Esophagus muscularis mucosa (tissue), 4 donors: ENCODE measurements at regions of chr15 and their contacts with region 1.

Region 1: GRCh38 chr15:34342737-34343575 is at the starts of genes NOP10 and NUTM1:
- DNase-seq: peak; percentile 97
- H3K4me3 ChIP-seq: peak within 1 kb of the TSS; percentile 64 to 87 (median 74)
- H3K27ac ChIP-seq: peak within 1 kb of the TSS; percentile 88 to 90 (median 89)
- H3K4me1 ChIP-seq: peaks cover 18 to 29% (median 23%) of the 10 kb centered on the region in 4 donors
- H3K27me3 ChIP-seq: no peaks in the 10 kb centered on the region
- CTCF ChIP-seq: peak; percentile 84 to 97 (median 92)
- EP300 ChIP-seq: no peak
- POLR2A ChIP-seq: peak; percentile 67
- total RNA-seq, gene NOP10: 78.5 to 136 (median 116) TPM
- total RNA-seq, gene NUTM1: not detected

Region 2: DNA sequence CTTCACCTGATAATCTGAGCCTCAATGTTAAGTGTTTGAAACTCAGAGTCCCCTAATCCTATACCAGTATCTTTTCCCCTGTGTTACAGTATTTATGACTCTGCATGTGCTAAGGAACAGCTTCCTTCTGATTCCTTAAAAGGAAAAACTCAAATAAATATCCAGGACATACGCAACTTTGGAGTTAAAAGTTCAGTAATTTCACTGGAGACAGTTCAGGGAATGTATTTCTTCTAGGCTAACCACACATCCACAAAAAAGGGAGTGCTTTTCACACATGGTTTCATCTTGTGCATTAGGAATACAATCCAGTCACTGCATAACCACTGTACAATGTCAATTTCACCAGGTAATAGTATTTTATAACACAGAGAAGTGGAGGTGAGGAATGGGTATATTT is 210.1 kb before region 1 on chr15:
- intact Hi-C with region 1: no loop called
- DNase-seq: no peak
- H3K4me3 ChIP-seq: no peak overlapping the region
- H3K27ac ChIP-seq: no peak overlapping the region
- H3K4me1 ChIP-seq: no peaks in the 10 kb centered on the region
- H3K27me3 ChIP-seq: no peaks in the 10 kb centered on the region
- CTCF ChIP-seq: no peak
- EP300 ChIP-seq: no peak
- POLR2A ChIP-seq: no peak

Region 3: GRCh38 chr15:34367101-34368081 is 24.4 kb after region 1 on chr15 and contains the start of gene LPCAT4:
- intact Hi-C with region 1: loop called (anchors 1 kb)
- DNase-seq: peak; percentile 94
- H3K4me3 ChIP-seq: peak within 1 kb of the TSS; percentile 89 to 98 (median 92)
- H3K27ac ChIP-seq: peak within 1 kb of the TSS; percentile 96 to 98 (median 98)
- H3K4me1 ChIP-seq: peaks cover 16 to 31% (median 26%) of the 10 kb centered on the region in 4 donors
- H3K27me3 ChIP-seq: no peaks in the 10 kb centered on the region
- CTCF ChIP-seq: peak; percentile 92 to 97 (median 97)
- EP300 ChIP-seq: no peak
- POLR2A ChIP-seq: no peak
- total RNA-seq, gene LPCAT4: 7.5 to 14.9 (median 11.5) TPM

Region 4: GRCh38 chr15:34701536-34701935 is 358.6 kb after region 1 on chr15:
- intact Hi-C with region 1: no loop called
- DNase-seq: no peak
- H3K4me3 ChIP-seq: no peak overlapping the region
- H3K27ac ChIP-seq: no peak overlapping the region
- H3K4me1 ChIP-seq: no peaks in the 10 kb centered on the region
- H3K27me3 ChIP-seq: peaks cover 0 to 8% (median 0%) of the 10 kb centered on the region in 4 donors
- CTCF ChIP-seq: no peak
- EP300 ChIP-seq: no peak
- POLR2A ChIP-seq: no peak